ENCODE measurements at regions of chr1 and their contacts with region 1.

Region 1: GRCh38 chr1:181318022-181318857 is 165.1 kb upstream of the CACNA1E start:
- DNase-seq: peak; percentile 27
- ATAC-seq: peak; percentile 42
- H3K4me3 Mint-ChIP-seq: peak overlapping the region; percentile 46
- H3K27ac Mint-ChIP-seq: peak overlapping the region; percentile 30
- H3K4me1 Mint-ChIP-seq: peaks cover 29% of the 10 kb centered on the region
- H3K27me3 Mint-ChIP-seq: peaks cover 55% of the 10 kb centered on the region

Region 2: GRCh38 chr1:181142096-181142958 is 175.9 kb before region 1 on chr1:
- CTCF ChIA-PET with region 1: no interaction called
- POLR2A ChIA-PET with region 1: no interaction called
- intact Hi-C with region 1: no loop called
- DNase-seq: peak; percentile 95
- ATAC-seq: peak; percentile 73
- H3K4me3 Mint-ChIP-seq: peak overlapping the region; percentile 33
- H3K27ac Mint-ChIP-seq: peak overlapping the region; percentile 85
- H3K4me1 Mint-ChIP-seq: peaks cover 46% of the 10 kb centered on the region
- H3K27me3 Mint-ChIP-seq: peaks cover 3% of the 10 kb centered on the region

Region 3: GRCh38 chr1:181189691-181190363 is 128.4 kb before region 1 on chr1:
- CTCF ChIA-PET with region 1: interaction called, 3 read pairs
- POLR2A ChIA-PET with region 1: no interaction called
- intact Hi-C with region 1: loop called in 1 of 2 experiments (anchors 5 kb)
- DNase-seq: peak; percentile 85
- ATAC-seq: peak; percentile 94
- H3K4me3 Mint-ChIP-seq: no peak overlapping the region
- H3K27ac Mint-ChIP-seq: no peak overlapping the region
- H3K4me1 Mint-ChIP-seq: no peaks in the 10 kb centered on the region
- H3K27me3 Mint-ChIP-seq: peaks cover 2% of the 10 kb centered on the region

Measured in activated CD4-positive, alpha-beta T cell treated with anti-CD3 and anti-CD28 coated beads for 36 hours (primary cell).